Mammary epithelial cell (primary cell): ENCODE measurements at regions of chr18 and their contacts with region 1.

Region 1: DNA sequence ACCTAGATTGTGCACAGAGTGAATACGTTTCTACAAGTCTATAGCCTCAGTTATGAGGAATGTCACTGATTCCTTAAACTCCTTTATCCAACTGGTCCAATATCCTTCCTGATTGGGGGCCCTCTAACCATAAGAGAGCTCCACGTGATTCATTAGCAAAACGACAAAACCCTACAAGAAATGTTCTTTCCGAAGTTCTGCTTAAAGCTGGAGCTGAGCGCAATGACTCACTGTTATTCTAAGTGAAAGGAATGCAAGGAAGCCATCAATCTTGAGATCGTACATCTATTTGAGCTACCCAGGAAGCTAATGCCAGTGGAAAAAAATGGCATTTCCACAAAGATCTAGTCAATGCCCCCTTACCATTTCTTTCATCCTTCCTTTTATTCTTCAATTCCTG is 354.9 kb upstream of the CDH20 start:
- DNase-seq: peak; percentile 59
- H3K4me3 ChIP-seq: no peak overlapping the region
- H3K27ac ChIP-seq: no peak overlapping the region
- H3K4me1 ChIP-seq: peaks cover 11% of the 10 kb centered on the region
- H3K27me3 ChIP-seq: no peaks in the 10 kb centered on the region
- CTCF ChIP-seq: no peak

Region 2: DNA sequence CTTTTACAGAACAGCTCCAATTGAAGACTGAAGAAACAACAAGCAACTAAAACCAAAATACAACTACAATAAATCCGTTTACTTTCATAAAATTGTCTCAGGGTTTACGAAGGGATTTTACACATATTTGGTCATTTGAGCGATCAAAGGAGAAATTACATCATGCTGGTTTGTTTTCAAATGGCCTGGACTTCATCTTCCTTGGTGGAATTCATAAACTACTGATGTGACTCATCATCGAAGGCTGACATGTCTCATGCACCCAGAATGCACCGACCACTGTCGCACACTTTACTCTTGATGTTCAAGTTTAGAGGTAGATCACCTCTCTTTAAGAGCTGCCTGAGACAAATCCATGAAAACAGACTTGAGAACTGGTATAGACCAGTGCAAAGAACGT is 1104.2 kb before region 1 on chr18:
- CTCF ChIA-PET with region 1: no interaction called
- dilution Hi-C with region 1: no loop called
- in situ Hi-C with region 1: no loop called
- intact Hi-C with region 1: no loop called
- DNase-seq: peak; percentile 61
- H3K4me3 ChIP-seq: no peak overlapping the region
- H3K27ac ChIP-seq: no peak overlapping the region
- H3K4me1 ChIP-seq: peaks cover 4% of the 10 kb centered on the region
- H3K27me3 ChIP-seq: no peaks in the 10 kb centered on the region
- CTCF ChIP-seq: no peak

Region 3: DNA sequence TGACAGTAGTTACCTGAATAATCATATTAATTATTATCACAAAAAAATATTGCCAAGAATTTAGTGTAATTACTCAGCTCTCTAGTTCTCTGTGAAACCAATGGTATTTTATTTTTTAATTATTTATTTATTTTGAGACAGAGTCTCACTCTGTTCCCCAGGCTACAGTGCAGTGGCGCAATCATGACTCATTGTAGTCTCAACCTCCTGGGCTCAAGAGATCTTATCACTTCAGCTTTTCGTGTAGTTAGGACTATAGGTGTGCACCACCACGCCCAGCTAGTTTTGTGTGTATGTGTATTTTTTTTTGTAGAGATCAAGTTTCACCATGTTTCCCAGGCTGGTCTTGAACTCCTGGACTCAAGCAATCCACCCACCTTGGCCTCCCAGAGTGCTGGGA is 85.5 kb before region 1 on chr18:
- CTCF ChIA-PET with region 1: interaction called, 3 read pairs
- dilution Hi-C with region 1: no loop called
- in situ Hi-C with region 1: no loop called
- intact Hi-C with region 1: loop called (anchors 5 kb)
- DNase-seq: peak; percentile 96
- H3K4me3 ChIP-seq: no peak overlapping the region
- H3K27ac ChIP-seq: peak overlapping the region; percentile 93
- H3K4me1 ChIP-seq: peaks cover 33% of the 10 kb centered on the region
- H3K27me3 ChIP-seq: no peaks in the 10 kb centered on the region
- CTCF ChIP-seq: no peak

Region 4: GRCh38 chr18:60943297-60943696 is 35.0 kb before region 1 on chr18:
- CTCF ChIA-PET with region 1: no interaction called
- dilution Hi-C with region 1: no loop called
- in situ Hi-C with region 1: no loop called
- intact Hi-C with region 1: no loop called
- DNase-seq: no peak
- H3K4me3 ChIP-seq: no peak overlapping the region
- H3K27ac ChIP-seq: no peak overlapping the region
- H3K4me1 ChIP-seq: no peaks in the 10 kb centered on the region
- H3K27me3 ChIP-seq: no peaks in the 10 kb centered on the region
- CTCF ChIP-seq: no peak